Prostate gland (tissue), 2 donors: ENCODE measurements at regions of chr11 and their contacts with region 1.

Region 1: GRCh38 chr11:2532704-2533586 is 88.1 kb downstream of the KCNQ1 start:
- DNase-seq: peak; percentile 91
- H3K4me3 ChIP-seq: no peak overlapping the region
- H3K27ac ChIP-seq: no peak overlapping the region
- H3K4me1 ChIP-seq: no peaks in the 10 kb centered on the region
- H3K27me3 ChIP-seq: no peaks in the 10 kb centered on the region
- CTCF ChIP-seq: peak; percentile 99 to 100 (median 100)
- POLR2A ChIP-seq: no peak

Region 2: GRCh38 chr11:1744137-1744886 is 788.6 kb before region 1 on chr11:
- intact Hi-C with region 1: no loop called
- DNase-seq: no peak
- H3K4me3 ChIP-seq: no peak overlapping the region
- H3K27ac ChIP-seq: no peak overlapping the region
- H3K4me1 ChIP-seq: no peaks in the 10 kb centered on the region
- H3K27me3 ChIP-seq: peaks cover 9% of the 10 kb centered on the region
- CTCF ChIP-seq: no peak
- POLR2A ChIP-seq: no peak

Region 3: DNA sequence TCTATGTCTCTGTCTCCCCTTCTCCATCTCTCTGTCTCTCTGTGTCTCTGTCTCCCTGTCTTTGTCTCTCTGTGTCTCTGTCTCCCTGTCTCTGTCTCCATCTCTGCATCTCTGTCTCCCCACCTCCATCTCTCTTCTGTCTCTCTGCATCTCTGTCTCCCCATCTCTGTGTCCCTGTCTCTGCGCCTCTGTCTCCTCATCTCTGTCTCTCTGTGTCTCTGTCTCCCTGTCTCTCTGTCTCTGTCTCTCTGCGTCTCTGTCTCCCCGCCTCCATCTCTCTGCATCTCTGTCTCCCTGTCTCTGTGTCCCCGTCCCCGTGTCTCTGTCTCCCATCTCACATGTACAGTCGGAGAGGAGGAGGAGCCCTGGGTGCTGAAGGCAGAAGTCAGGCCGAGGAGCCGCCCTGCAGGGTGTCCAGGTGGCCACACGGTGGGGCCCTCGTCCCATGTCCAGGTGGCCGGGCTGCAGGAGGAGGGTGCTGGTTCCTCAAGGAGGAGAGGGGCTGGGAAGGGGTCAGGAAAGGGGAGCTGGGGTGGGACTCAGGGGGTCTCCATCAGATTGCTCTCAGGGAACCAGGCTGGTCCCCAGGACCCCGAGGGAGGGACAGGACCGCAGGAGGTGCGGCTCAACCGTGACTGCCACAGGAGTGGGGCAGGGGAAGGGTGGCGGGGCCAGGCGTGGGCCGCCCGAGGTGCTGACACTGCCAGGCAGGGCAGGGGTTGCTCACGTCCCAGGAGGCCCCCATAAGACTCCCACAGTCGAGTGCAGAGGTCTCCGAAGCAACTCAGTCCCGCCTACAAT is 335.8 kb before region 1 on chr11:
- intact Hi-C with region 1: loop called (anchors 5 kb)
- DNase-seq: peak; percentile 77
- H3K4me3 ChIP-seq: no peak overlapping the region
- H3K27ac ChIP-seq: no peak overlapping the region
- H3K4me1 ChIP-seq: no peaks in the 10 kb centered on the region
- H3K27me3 ChIP-seq: no peaks in the 10 kb centered on the region
- CTCF ChIP-seq: peak; percentile 80 to 98 (median 92)
- POLR2A ChIP-seq: no peak

Region 4: DNA sequence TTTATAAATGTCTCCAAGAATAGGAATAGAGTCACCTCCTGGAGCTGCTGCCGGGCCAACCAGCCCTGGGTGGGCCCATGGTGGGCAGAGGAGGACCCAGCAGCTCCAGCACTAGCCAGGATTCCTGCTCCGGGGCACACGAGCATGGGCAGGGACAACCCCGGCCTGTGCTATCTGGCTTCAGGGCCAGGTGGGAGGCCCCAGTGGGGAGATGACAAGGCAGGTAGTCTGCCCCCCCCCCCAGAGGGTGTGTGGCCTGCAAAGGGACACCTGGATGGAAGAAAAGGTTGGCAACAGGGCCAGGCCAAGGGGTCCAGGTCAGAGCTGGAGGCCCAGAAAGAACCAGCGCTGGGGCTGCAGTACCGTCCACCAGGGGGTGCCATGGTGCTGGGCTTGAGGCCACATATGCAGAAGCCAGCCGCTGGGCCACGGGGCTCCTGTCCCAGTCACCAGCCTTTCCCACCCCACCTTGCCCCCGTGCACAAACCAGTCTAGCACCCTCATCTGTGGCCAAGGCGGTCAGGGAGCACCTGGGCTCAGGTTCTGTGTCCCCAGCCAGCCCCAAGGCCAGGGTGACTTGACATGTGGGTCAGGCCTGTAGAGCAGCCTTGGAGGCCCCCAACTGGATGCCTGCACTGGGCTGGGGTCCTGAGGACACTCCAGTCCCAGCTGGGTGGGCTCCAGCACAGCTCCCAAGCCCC is 227.7 kb before region 1 on chr11:
- intact Hi-C with region 1: loop called (anchors 5 kb)
- DNase-seq: peak; percentile 74
- H3K4me3 ChIP-seq: no peak overlapping the region
- H3K27ac ChIP-seq: peak overlapping the region in 1 of 2 donors; percentile 19
- H3K4me1 ChIP-seq: no peaks in the 10 kb centered on the region
- H3K27me3 ChIP-seq: no peaks in the 10 kb centered on the region
- CTCF ChIP-seq: peak; percentile 86 to 98 (median 92)
- POLR2A ChIP-seq: no peak

Region 5: GRCh38 chr11:2428322-2428795 is 104.6 kb before region 1 on chr11:
- intact Hi-C with region 1: loop called (anchors 2 kb)
- DNase-seq: peak; percentile 77
- H3K4me3 ChIP-seq: no peak overlapping the region
- H3K27ac ChIP-seq: no peak overlapping the region
- H3K4me1 ChIP-seq: no peaks in the 10 kb centered on the region
- H3K27me3 ChIP-seq: no peaks in the 10 kb centered on the region
- CTCF ChIP-seq: peak; percentile 93 to 98 (median 98)
- POLR2A ChIP-seq: no peak

Region 6: DNA sequence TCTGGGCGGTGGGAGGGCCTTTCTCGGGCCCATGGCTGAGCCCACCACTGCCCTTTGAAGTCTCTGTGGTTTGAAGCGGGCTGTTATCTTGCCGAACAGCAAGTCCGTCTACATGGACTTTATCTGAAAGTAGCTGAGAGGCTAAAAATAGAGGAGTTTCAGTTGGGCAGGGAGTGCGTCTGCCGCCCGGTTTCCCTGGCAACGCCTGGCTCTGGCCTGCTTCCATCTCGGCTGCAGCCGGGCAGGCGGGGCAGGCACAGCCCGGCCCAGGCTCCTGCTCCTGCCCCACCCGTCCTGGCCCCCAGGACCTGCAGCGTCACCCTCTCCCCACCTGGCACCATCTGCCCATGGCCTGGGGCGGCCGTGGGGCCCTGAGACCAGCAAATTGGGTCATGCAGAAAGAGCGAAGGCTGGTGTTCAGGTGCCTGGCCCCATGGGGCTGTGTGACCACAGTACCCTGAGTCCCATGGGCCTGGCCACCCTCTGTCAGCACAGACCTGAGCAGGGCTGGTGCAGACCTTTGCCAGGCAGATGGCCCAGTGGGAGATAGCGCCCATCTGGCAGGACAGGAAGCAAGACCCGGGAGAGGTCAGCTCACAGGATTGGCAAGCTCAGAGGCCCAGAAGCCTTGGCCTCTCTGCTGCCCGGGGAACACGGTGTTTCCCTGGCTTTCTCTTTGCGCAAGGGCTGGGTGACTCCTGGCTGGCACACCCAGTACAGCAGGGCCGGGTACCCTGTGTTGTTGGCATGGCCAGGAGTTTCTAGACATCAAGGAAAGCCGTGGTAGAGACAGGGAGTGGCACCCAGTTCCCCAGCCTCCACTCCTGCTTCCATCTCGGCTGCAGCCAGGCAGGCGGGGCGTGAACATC is 245.9 kb after region 1 on chr11:
- intact Hi-C with region 1: loop called (anchors 5 kb)
- DNase-seq: peak; percentile 87
- H3K4me3 ChIP-seq: no peak overlapping the region
- H3K27ac ChIP-seq: peak overlapping the region; percentile 74
- H3K4me1 ChIP-seq: peaks cover 16% of the 10 kb centered on the region
- H3K27me3 ChIP-seq: no peaks in the 10 kb centered on the region
- CTCF ChIP-seq: peak in 2 of 4 experiments; percentile 60 to 70
- POLR2A ChIP-seq: peak; percentile 7

Region 7: DNA sequence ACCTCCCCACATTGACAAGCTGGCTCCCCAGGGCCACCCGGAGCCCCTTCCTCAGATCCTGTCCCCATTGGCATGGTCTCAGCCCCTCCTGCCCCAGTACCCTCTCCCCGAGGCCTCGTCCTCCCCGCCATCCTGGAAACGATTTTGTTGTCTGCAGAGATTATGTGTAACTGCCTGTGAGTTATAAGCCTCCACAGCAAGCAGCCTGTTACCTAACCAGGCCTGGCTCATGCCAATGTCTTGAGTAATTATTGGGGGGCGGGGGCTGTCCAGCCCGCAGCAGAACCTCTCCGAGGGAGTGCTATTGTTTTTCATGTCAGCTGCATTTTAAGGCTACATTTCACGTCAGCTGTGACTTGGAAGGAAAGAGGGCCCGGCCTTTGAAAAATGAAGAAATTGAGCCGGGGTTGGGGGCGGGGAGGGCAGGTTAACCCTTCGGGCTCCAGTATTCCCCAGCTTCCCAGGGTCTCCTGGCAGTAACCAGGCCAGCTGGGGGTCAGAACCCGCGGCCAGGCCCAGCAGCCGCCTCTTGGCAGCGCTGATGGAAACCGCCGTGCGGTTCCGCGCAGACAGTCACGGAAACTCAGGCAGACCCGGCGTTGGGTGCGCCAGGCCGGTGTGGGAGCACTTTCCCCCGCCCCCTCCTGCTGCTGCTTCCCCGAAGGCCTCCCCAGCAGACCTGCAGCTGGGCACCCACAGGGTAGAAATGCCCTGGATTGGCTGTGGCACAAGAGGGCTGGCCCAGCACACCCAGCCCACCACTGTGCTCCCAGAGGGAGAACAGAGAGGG is 293.1 kb after region 1 on chr11:
- intact Hi-C with region 1: loop called (anchors 5 kb)
- DNase-seq: peak; percentile 82
- H3K4me3 ChIP-seq: no peak overlapping the region
- H3K27ac ChIP-seq: peak overlapping the region; percentile 84 to 85
- H3K4me1 ChIP-seq: peaks cover 20% of the 10 kb centered on the region
- H3K27me3 ChIP-seq: no peaks in the 10 kb centered on the region
- CTCF ChIP-seq: no peak
- POLR2A ChIP-seq: no peak